ENCODE measurements at regions of chr13 and their contacts with region 1.

Region 1: GRCh38 chr13:48731957-48732569 is 78.3 kb downstream of the CYSLTR2 start:
- DNase-seq: peak; percentile 29 to 72 (median 61)
- ATAC-seq: peak; percentile 77
- H3K4me3 ChIP-seq: peak overlapping the region; percentile 9 to 29
- H3K4me3 Mint-ChIP-seq: peak overlapping the region; percentile 74
- H3K27ac ChIP-seq: no peak overlapping the region
- H3K27ac Mint-ChIP-seq: no peak overlapping the region
- H3K4me1 ChIP-seq: no peaks in the 10 kb centered on the region
- H3K4me1 Mint-ChIP-seq: peaks cover 2% of the 10 kb centered on the region
- H3K27me3 ChIP-seq: no peaks in the 10 kb centered on the region
- H3K27me3 Mint-ChIP-seq: no peaks in the 10 kb centered on the region
- CTCF ChIP-seq: peak; percentile 70

Region 2: GRCh38 chr13:48318821-48319511 is 413.1 kb before region 1 on chr13:
- CTCF ChIA-PET with region 1: no interaction called
- POLR2A ChIA-PET with region 1: no interaction called
- intact Hi-C with region 1: no loop called
- DNase-seq: peak in 4 of 9 experiments; percentile 19 to 53 (median 32)
- ATAC-seq: peak; percentile 30
- H3K4me3 ChIP-seq: peak overlapping the region; percentile 26 to 40
- H3K4me3 Mint-ChIP-seq: peak overlapping the region; percentile 80
- H3K27ac ChIP-seq: no peak overlapping the region
- H3K27ac Mint-ChIP-seq: no peak overlapping the region
- H3K4me1 ChIP-seq: peaks cover 6% of the 10 kb centered on the region
- H3K4me1 Mint-ChIP-seq: peaks cover 22% of the 10 kb centered on the region
- H3K27me3 ChIP-seq: no peaks in the 10 kb centered on the region
- H3K27me3 Mint-ChIP-seq: no peaks in the 10 kb centered on the region
- CTCF ChIP-seq: no peak

Region 3: GRCh38 chr13:48595431-48596429 is 136.3 kb before region 1 on chr13:
- CTCF ChIA-PET with region 1: interaction called, 25 read pairs
- POLR2A ChIA-PET with region 1: no interaction called
- intact Hi-C with region 1: loop called (anchors 1 kb)
- DNase-seq: peak; percentile 20 to 83 (median 48)
- ATAC-seq: peak; percentile 81
- H3K4me3 ChIP-seq: no peak overlapping the region
- H3K4me3 Mint-ChIP-seq: no peak overlapping the region
- H3K27ac ChIP-seq: no peak overlapping the region
- H3K27ac Mint-ChIP-seq: no peak overlapping the region
- H3K4me1 ChIP-seq: no peaks in the 10 kb centered on the region
- H3K4me1 Mint-ChIP-seq: no peaks in the 10 kb centered on the region
- H3K27me3 ChIP-seq: no peaks in the 10 kb centered on the region
- H3K27me3 Mint-ChIP-seq: no peaks in the 10 kb centered on the region
- CTCF ChIP-seq: peak; percentile 48

Region 4: GRCh38 chr13:49146950-49147355 is 414.9 kb after region 1 on chr13:
- CTCF ChIA-PET with region 1: no interaction called
- POLR2A ChIA-PET with region 1: no interaction called
- intact Hi-C with region 1: no loop called
- DNase-seq: peak in 2 of 9 experiments; percentile 60 to 78
- ATAC-seq: peak; percentile 84
- H3K4me3 ChIP-seq: peak overlapping the region; percentile 41
- H3K4me3 Mint-ChIP-seq: peak overlapping the region; percentile 83
- H3K27ac ChIP-seq: peak overlapping the region; percentile 45 to 73
- H3K27ac Mint-ChIP-seq: peak overlapping the region; percentile 96
- H3K4me1 ChIP-seq: peaks cover 17% of the 10 kb centered on the region
- H3K4me1 Mint-ChIP-seq: peaks cover 44% of the 10 kb centered on the region
- H3K27me3 ChIP-seq: no peaks in the 10 kb centered on the region
- H3K27me3 Mint-ChIP-seq: no peaks in the 10 kb centered on the region
- CTCF ChIP-seq: no peak

Measured in CD8-positive, alpha-beta T cell (primary cell).